ENCODE measurements at regions of chr19 and their contacts with region 1.

Region 1: DNA sequence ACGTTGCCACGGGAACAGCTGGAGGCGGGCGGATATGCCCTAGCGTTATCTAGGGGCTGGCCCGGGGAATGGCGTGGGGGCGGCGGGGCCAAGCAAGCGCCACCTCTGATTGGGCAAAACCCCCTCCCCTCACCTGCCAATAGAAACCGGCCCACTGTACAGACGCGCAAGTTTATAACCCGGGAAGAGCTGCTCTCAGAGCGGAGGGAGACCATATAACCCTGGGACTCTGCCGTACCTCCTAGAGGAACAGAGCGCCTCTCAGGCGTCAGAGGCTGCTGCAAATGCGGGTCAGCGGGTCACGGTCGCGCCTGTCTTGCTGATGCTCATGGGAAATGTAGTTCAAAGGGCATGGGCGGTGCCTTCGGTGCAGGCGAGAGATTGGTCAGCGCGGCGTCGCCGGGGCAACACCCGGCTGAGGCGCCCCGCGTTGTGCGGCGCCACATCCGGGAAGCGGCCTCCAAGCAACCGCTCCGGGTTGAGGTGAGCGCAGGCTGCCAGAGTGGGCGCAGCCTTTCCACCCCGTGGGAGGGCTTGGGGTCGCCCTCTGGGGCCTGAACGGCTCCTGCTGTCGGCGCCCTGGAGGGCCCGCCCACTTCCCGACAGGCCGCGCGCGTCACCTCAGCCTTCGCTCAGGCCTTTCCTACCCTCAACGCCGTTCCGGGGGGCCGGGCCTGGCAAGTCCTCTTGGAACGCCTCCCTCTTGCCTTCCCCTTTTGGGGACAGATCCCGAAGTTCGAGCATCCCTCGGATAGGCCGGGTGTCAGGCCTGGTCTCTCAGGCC is at the start of gene ZNF446:
- DNase-seq: peak; percentile 98
- ATAC-seq: peak; percentile 92
- H3K4me3 Mint-ChIP-seq: peak within 1 kb of the TSS; percentile 83
- H3K27ac Mint-ChIP-seq: peak within 1 kb of the TSS; percentile 96
- H3K4me1 Mint-ChIP-seq: peaks cover 14% of the 10 kb centered on the region
- H3K27me3 Mint-ChIP-seq: no peaks in the 10 kb centered on the region
- total RNA-seq, gene ZNF446: 4.2 to 4.7 TPM

Region 2: GRCh38 chr19:56917998-56918397 is 1557.9 kb before region 1 on chr19:
- CTCF ChIA-PET with region 1: no interaction called
- POLR2A ChIA-PET with region 1: no interaction called
- intact Hi-C with region 1: no loop called
- DNase-seq: no peak
- ATAC-seq: no peak
- H3K4me3 Mint-ChIP-seq: no peak overlapping the region
- H3K27ac Mint-ChIP-seq: no peak overlapping the region
- H3K4me1 Mint-ChIP-seq: no peaks in the 10 kb centered on the region
- H3K27me3 Mint-ChIP-seq: no peaks in the 10 kb centered on the region

Region 3: GRCh38 chr19:58362272-58362994 is 113.5 kb before region 1 on chr19 and contains the start of gene ZNF497:
- CTCF ChIA-PET with region 1: no interaction called
- POLR2A ChIA-PET with region 1: no interaction called
- intact Hi-C with region 1: loop called in 1 of 2 experiments (anchors 1 kb)
- DNase-seq: peak; percentile 99
- ATAC-seq: peak; percentile 94
- H3K4me3 Mint-ChIP-seq: peak within 1 kb of the TSS; percentile 86
- H3K27ac Mint-ChIP-seq: peak within 1 kb of the TSS; percentile 93
- H3K4me1 Mint-ChIP-seq: peaks cover 7% of the 10 kb centered on the region
- H3K27me3 Mint-ChIP-seq: no peaks in the 10 kb centered on the region
- total RNA-seq, gene ZNF497: 1.1 to 1.5 TPM

Region 4: GRCh38 chr19:58400916-58401839 is 74.7 kb before region 1 on chr19:
- CTCF ChIA-PET with region 1: no interaction called
- POLR2A ChIA-PET with region 1: no interaction called
- intact Hi-C with region 1: loop called (anchors 1 to 5 kb)
- DNase-seq: peak; percentile 100
- ATAC-seq: peak; percentile 97
- H3K4me3 Mint-ChIP-seq: peak overlapping the region; percentile 82
- H3K27ac Mint-ChIP-seq: peak overlapping the region; percentile 61
- H3K4me1 Mint-ChIP-seq: peaks cover 14% of the 10 kb centered on the region
- H3K27me3 Mint-ChIP-seq: peaks cover 2% of the 10 kb centered on the region

Region 5: GRCh38 chr19:58434217-58434616 is 41.7 kb before region 1 on chr19:
- CTCF ChIA-PET with region 1: no interaction called
- POLR2A ChIA-PET with region 1: no interaction called
- intact Hi-C with region 1: no loop called
- DNase-seq: no peak
- ATAC-seq: no peak
- H3K4me3 Mint-ChIP-seq: no peak overlapping the region
- H3K27ac Mint-ChIP-seq: no peak overlapping the region
- H3K4me1 Mint-ChIP-seq: peaks cover 14% of the 10 kb centered on the region
- H3K27me3 Mint-ChIP-seq: no peaks in the 10 kb centered on the region

Region 6: GRCh38 chr19:58451358-58452101 is 24.4 kb before region 1 on chr19 and contains the start of gene ZNF324B:
- CTCF ChIA-PET with region 1: no interaction called
- POLR2A ChIA-PET with region 1: no interaction called
- intact Hi-C with region 1: loop called (anchors 1 kb)
- DNase-seq: peak; percentile 98
- ATAC-seq: peak; percentile 99
- H3K4me3 Mint-ChIP-seq: peak within 1 kb of the TSS; percentile 77
- H3K27ac Mint-ChIP-seq: peak within 1 kb of the TSS; percentile 55
- H3K4me1 Mint-ChIP-seq: peaks cover 25% of the 10 kb centered on the region
- H3K27me3 Mint-ChIP-seq: peaks cover 15% of the 10 kb centered on the region
- total RNA-seq, gene ZNF324B: 5.8 to 7.5 TPM

Region 7: GRCh38 chr19:58513694-58514563 is 38.0 kb after region 1 on chr19:
- CTCF ChIA-PET with region 1: no interaction called
- POLR2A ChIA-PET with region 1: no interaction called
- intact Hi-C with region 1: loop called (anchors 1 to 5 kb)
- DNase-seq: peak; percentile 99
- ATAC-seq: peak; percentile 88
- H3K4me3 Mint-ChIP-seq: peak overlapping the region; percentile 88
- H3K27ac Mint-ChIP-seq: peak overlapping the region; percentile 81
- H3K4me1 Mint-ChIP-seq: peaks cover 27% of the 10 kb centered on the region
- H3K27me3 Mint-ChIP-seq: no peaks in the 10 kb centered on the region

Region 8: DNA sequence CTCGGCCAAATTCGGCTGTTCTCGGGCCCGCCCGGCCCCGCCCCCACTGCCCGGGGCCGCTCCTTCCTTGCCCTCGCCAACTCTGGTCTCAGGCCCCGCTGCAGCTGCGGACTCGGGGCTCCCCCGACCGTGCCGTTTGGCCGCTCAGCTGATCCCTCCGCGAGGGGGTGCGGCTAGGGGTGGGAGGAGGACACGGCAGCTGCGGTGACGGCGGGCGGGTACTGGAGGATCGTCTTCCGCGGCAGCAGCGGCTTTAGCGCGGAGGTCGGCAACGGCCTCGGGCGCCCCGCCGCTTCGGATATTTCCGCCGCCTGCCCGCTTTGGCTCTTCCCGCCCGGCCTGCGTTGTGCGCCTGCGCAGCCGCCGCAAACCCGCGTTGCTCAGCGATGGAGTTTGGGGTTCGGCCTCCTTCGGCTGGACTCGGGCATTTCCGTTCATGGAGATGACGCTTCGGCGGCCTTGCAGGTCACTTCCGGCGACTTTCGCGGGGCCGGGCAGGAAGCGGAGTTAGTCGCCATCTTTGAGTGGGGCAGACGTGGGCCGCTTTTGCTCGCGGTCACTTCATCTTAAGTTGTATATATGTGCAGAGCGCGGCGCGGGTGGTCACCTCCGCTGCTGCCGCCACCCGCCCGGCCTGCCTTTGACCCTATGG is 82.8 kb after region 1 on chr19:
- CTCF ChIA-PET with region 1: no interaction called
- POLR2A ChIA-PET with region 1: no interaction called
- intact Hi-C with region 1: loop called in 1 of 2 experiments (anchors 1 kb)
- DNase-seq: peak; percentile 100
- ATAC-seq: peak; percentile 69
- H3K4me3 Mint-ChIP-seq: peak overlapping the region; percentile 92
- H3K27ac Mint-ChIP-seq: peak overlapping the region; percentile 100
- H3K4me1 Mint-ChIP-seq: peaks cover 65% of the 10 kb centered on the region
- H3K27me3 Mint-ChIP-seq: no peaks in the 10 kb centered on the region